Activated CD4-positive, alpha-beta T cell treated with anti-CD3 and anti-CD28 coated beads, Interleukin-2, amount 10 ng/mL, durations not matched to agents 24 days and 14 days (primary cell): ENCODE measurements at regions of chr1 and their contacts with region 1.

Region 1: DNA sequence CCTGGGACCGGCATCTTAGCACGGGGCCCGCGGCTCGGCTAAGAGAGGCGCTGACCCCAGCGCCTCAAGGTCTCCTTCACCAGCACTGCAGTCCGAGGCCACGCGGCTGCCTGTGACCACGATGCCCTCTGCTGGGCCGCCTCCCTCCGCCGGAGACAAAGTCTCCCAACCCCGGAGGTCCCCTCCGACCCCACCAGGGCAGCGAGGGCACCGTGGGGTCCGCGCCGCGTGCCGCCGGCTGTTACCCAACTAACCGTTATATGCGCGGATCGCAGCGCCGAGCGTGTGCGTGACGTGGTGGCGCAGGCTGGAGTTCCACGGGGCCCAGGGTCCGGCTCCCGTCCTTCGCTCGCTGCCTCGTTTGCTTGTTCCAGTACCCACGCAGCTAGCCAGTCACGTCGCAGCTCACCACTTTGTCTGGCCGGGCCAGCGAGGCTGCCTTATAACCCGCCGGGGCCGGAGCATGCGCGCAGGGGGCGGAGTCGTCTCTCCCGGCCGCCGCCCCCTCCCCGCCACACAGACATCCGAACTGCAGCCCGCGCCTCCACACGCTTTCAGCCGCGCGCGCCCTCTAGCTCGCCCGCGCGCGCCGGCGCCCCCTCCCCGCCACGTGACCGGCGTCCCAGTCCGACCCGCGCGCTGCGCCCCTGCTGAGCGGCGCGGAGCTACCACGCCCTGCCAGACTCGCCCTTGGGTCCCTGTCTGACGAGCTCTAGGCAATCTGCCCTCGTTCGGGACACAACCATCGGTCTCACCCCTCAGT is at the start of gene SLC16A1:
- DNase-seq: peak; percentile 97
- H3K4me3 Mint-ChIP-seq: peak within 1 kb of the TSS; percentile 88
- H3K27ac Mint-ChIP-seq: peak within 1 kb of the TSS; percentile 100
- H3K4me1 Mint-ChIP-seq: peaks cover 51% of the 10 kb centered on the region
- H3K27me3 Mint-ChIP-seq: no peaks in the 10 kb centered on the region
- total RNA-seq, gene SLC16A1: 79.2 and 79.7 TPM in 2 replicates

Region 2: DNA sequence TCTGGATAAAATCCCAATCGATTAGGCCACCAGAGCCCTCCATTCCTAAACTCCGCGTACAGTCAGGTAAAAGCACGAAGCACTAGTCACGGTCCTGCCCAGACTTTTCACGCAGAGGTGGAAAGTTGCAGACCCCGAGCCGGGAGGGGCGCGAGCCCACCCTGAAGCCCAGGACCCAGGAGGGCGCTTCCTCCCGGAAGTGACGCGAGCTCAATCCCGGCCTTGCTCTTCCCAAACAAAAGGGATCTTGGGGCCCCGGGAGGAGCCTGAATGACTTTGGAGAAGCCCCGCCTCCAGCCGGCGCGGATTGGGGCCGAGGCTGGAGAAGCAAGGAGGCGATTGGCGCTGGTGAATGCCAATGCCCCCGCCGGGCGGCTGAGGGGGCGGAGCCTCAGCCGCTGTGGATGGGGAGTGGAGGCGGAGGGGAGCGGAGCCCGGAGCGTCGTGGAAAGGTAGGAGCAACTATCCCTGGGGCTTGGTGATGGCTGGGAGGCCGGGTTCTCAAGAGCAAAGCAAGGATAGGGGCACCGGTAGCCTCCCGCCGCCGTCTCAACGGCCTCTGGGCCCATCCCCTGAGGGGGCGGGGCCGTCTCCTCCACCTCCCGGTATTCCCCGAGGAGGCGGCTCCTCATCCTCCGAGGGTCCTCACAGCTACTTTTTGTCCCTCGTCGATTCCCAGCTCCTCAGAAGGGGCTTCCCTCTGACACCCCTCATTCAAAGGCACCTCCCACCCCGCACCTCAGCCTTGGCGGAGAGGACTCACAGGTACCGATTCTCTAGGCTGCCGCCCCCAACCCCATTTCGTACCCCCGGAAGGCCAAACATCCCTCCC is 559.9 kb before region 1 on chr1 and contains the start of gene CTTNBP2NL:
- intact Hi-C with region 1: loop called (anchors 2 kb)
- DNase-seq: peak; percentile 95
- H3K4me3 Mint-ChIP-seq: peak within 1 kb of the TSS; percentile 89
- H3K27ac Mint-ChIP-seq: peak within 1 kb of the TSS; percentile 78
- H3K4me1 Mint-ChIP-seq: peaks cover 31% of the 10 kb centered on the region
- H3K27me3 Mint-ChIP-seq: peaks cover 10% of the 10 kb centered on the region
- total RNA-seq, gene CTTNBP2NL: 3.9 and 4.1 TPM in 2 replicates

Region 3: GRCh38 chr1:112881742-112882127 is 74.2 kb before region 1 on chr1:
- intact Hi-C with region 1: loop called (anchors 2 kb)
- DNase-seq: no peak
- H3K4me3 Mint-ChIP-seq: no peak overlapping the region
- H3K27ac Mint-ChIP-seq: no peak overlapping the region
- H3K4me1 Mint-ChIP-seq: peaks cover 3% of the 10 kb centered on the region
- H3K27me3 Mint-ChIP-seq: peaks cover 21% of the 10 kb centered on the region

Region 4: DNA sequence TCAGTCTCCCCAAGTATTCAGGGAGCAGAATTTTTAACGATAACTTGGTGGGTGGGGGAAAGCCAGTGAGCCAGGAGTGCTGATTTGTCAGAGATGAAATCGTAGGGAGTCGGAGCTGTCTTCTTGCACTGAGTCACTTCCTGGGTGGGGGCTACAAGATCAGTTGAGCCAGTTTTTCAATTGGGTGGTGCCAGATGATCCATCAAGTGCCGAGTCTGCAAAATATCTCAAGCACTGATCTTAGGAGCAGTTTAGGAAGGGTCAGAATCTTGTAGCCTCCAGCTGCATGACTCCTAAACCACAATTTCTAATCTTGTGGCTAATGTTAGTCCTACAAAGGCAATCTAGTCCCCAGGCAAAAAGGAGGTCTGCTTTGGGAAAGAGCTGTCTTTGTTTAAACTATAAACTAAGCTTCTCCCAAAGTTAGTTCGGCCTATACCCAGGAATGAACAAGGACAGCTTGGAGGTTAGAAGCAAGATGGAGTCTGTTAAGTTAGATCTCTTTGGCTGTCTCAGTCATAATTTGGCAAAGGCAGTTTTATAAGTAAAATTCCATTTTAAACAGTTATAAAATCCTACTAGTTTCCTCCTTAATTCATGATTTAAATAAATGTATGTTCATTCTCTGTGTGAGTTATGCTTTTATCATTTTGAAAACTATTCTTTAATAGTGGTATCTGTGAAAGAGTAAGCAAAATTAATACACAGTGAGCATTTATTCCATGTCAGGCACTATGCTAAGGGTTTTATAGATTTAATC is 51.7 kb before region 1 on chr1:
- intact Hi-C with region 1: loop called (anchors 1 kb)
- DNase-seq: peak; percentile 80
- H3K4me3 Mint-ChIP-seq: no peak overlapping the region
- H3K27ac Mint-ChIP-seq: peak overlapping the region; percentile 45
- H3K4me1 Mint-ChIP-seq: peaks cover 28% of the 10 kb centered on the region
- H3K27me3 Mint-ChIP-seq: no peaks in the 10 kb centered on the region

Region 5: GRCh38 chr1:112925015-112925414 is 30.9 kb before region 1 on chr1:
- intact Hi-C with region 1: no loop called
- DNase-seq: peak; percentile 42
- H3K4me3 Mint-ChIP-seq: no peak overlapping the region
- H3K27ac Mint-ChIP-seq: no peak overlapping the region
- H3K4me1 Mint-ChIP-seq: peaks cover 8% of the 10 kb centered on the region
- H3K27me3 Mint-ChIP-seq: no peaks in the 10 kb centered on the region

Region 6: DNA sequence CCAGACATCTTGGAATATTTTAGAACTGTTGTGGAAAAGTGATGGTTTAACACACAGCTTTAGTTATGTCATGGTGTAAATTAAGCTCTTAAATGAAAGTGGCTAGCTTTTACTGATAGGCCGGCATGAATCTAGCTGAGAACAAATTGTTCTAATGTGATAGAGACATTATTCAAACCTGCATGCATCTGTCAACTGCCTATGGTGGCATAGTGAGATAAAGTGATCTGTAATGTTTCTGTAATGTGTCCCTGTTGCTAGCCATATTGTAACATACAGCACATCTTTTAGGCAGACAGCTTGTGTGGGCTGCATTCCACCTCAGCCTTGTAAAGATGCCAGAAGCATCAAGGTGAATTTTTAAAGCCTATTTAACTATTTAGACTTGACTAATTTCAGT is 133.0 kb after region 1 on chr1:
- intact Hi-C with region 1: no loop called
- DNase-seq: no peak
- H3K4me3 Mint-ChIP-seq: no peak overlapping the region
- H3K27ac Mint-ChIP-seq: no peak overlapping the region
- H3K4me1 Mint-ChIP-seq: peaks cover 9% of the 10 kb centered on the region
- H3K27me3 Mint-ChIP-seq: no peaks in the 10 kb centered on the region